Endothelial cell of umbilical vein (primary cell): ENCODE measurements at regions of chr22 and their contacts with region 1.

Region 1: DNA sequence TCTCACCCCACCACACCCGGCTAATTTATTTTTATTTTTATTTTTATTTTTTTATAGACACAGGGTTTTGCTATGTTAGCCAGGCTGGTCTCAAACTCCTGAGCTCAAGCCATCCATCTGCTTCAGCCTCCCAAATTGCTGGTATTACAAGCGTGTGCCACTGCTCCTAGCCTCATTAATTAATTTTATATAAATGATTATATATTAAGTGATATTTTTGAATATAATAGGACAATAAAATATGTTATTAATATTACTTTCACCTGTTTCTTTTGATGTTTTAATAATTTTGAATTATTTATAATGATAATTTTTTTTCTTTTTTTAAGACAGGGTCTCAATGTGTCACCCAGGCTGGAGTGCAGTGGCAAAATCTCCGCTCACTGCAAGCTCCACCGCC is 2.2 kb upstream of the SEC14L4 start:
- DNase-seq: no peak
- H3K4me3 ChIP-seq: no peak overlapping the region
- H3K27ac ChIP-seq: no peak overlapping the region
- H3K4me1 ChIP-seq: no peaks in the 10 kb centered on the region
- H3K27me3 ChIP-seq: peaks cover 13% of the 10 kb centered on the region in 2 experiments
- CTCF ChIP-seq: no peak
- POLR2A ChIP-seq: no peak

Region 2: GRCh38 chr22:30408414-30409104 is 99.1 kb before region 1 on chr22:
- CTCF ChIA-PET with region 1: no interaction called
- POLR2A ChIA-PET with region 1: no interaction called
- dilution Hi-C with region 1: no loop called
- intact Hi-C with region 1: no loop called
- DNase-seq: peak; percentile 50
- H3K4me3 ChIP-seq: no peak overlapping the region
- H3K27ac ChIP-seq: peak overlapping the region; percentile 6
- H3K4me1 ChIP-seq: peaks cover 6% of the 10 kb centered on the region
- H3K27me3 ChIP-seq: no peaks in the 10 kb centered on the region
- CTCF ChIP-seq: no peak
- POLR2A ChIP-seq: no peak

Region 3: DNA sequence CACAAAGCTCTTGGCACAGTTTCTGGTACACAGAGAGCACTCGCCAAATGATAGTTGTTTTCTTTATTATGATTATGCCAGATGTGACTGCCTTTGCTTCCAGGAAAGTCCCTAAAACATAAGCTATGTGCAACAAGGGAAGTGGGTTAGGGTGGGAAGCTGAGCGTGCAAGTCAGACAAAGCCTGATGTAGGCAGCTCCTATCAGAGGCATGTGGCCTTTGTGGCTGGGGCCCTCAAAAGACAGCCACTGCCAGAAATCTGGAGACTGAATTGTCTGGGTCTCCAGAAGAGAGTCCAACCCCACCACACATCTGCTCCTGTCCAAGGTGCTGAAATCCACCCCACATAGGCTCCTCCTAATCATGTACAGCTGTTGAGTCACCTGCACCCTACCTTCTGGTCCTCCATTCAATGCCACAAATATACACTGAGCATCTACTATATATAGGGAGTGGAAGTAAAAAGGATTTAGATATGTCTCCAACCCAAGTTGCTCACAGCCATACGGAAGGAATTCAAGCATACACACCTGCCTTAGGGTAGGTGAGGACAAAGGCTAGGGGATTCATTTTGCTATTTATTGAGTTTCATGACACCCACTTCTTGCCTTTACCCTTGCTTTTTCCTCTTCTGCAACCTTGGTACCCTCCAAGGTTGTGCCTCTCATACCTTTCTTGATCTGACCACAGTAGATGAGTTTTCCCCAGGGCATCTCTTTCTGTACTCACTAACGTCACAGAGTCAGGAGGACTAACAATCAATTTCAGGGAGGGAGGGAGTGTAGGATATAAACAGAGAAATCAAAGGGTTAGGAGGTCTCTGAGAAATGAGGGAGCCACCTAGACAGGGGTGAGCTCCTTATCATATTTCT is 48.3 kb before region 1 on chr22:
- CTCF ChIA-PET with region 1: no interaction called
- POLR2A ChIA-PET with region 1: no interaction called
- dilution Hi-C with region 1: no loop called
- intact Hi-C with region 1: loop called (anchors 1 kb)
- DNase-seq: no peak
- H3K4me3 ChIP-seq: no peak overlapping the region
- H3K27ac ChIP-seq: no peak overlapping the region
- H3K4me1 ChIP-seq: no peaks in the 10 kb centered on the region
- H3K27me3 ChIP-seq: peaks cover 0 to 3% of the 10 kb centered on the region in 2 experiments
- CTCF ChIP-seq: no peak
- POLR2A ChIP-seq: no peak

Region 4: GRCh38 chr22:30474683-30475424 is 32.8 kb before region 1 on chr22:
- CTCF ChIA-PET with region 1: no interaction called
- POLR2A ChIA-PET with region 1: no interaction called
- dilution Hi-C with region 1: no loop called
- intact Hi-C with region 1: no loop called
- DNase-seq: no peak
- H3K4me3 ChIP-seq: no peak overlapping the region
- H3K27ac ChIP-seq: no peak overlapping the region
- H3K4me1 ChIP-seq: no peaks in the 10 kb centered on the region
- H3K27me3 ChIP-seq: peaks cover 11% of the 10 kb centered on the region in 2 experiments
- CTCF ChIP-seq: no peak
- POLR2A ChIP-seq: no peak

Region 5: GRCh38 chr22:30806391-30806861 is 298.8 kb after region 1 on chr22:
- CTCF ChIA-PET with region 1: no interaction called
- POLR2A ChIA-PET with region 1: no interaction called
- dilution Hi-C with region 1: no loop called
- intact Hi-C with region 1: no loop called
- DNase-seq: peak; percentile 69
- H3K4me3 ChIP-seq: no peak overlapping the region
- H3K27ac ChIP-seq: no peak overlapping the region
- H3K4me1 ChIP-seq: peaks cover 12% of the 10 kb centered on the region
- H3K27me3 ChIP-seq: peaks cover 4 to 5% of the 10 kb centered on the region in 2 experiments
- CTCF ChIP-seq: no peak
- POLR2A ChIP-seq: no peak